ENCODE measurements at regions of chr20 and their contacts with region 1.

Region 1: GRCh38 chr20:34558320-34559218 is at the start of gene MAP1LC3A:
- DNase-seq: peak; percentile 90
- H3K4me3 Mint-ChIP-seq: peak within 1 kb of the TSS; percentile 81
- H3K27ac Mint-ChIP-seq: peak within 1 kb of the TSS; percentile 81
- H3K4me1 Mint-ChIP-seq: peaks cover 11% of the 10 kb centered on the region
- H3K27me3 Mint-ChIP-seq: no peaks in the 10 kb centered on the region
- total RNA-seq, gene MAP1LC3A: 1.6 to 1.7 TPM

Region 2: GRCh38 chr20:34415079-34415478 is 143.5 kb before region 1 on chr20:
- CTCF ChIA-PET with region 1: no interaction called
- intact Hi-C with region 1: no loop called
- DNase-seq: no peak
- H3K4me3 Mint-ChIP-seq: no peak overlapping the region
- H3K27ac Mint-ChIP-seq: peak overlapping the region; percentile 62
- H3K4me1 Mint-ChIP-seq: peaks cover 17% of the 10 kb centered on the region
- H3K27me3 Mint-ChIP-seq: no peaks in the 10 kb centered on the region

Region 3: DNA sequence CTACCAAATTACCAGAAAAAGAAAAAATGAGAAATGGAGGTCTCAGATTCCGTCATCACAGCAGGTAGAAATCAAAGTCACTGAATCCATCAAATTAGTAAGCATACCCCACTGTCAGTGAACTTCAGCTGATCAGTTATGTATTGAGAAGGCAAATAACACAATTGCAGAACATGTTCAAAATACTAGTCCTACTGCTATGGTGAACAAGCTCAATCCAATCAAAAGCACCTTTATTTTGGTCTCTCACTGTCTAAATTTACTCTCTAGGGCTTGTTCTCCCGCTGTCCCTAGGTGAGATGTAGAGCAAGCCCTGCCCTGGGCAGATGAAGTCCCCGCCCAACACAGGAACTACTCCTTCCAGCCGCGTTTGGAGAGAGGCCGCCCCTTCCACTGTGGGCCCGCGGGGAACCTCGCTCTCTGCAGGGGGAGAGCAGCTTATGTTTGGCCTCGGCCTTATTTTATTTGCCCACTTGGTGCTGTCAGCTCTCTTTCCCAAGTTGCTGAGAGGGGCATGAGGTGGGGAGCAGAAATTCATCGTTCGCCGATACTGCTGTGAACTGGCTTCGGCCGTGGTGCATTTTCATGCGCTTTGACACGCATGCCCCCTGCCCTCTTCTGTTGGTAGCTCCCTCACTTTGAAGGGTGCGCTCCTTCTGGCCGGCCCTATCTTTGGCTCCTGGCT is 14.3 kb before region 1 on chr20:
- CTCF ChIA-PET with region 1: interaction called, 3 read pairs
- intact Hi-C with region 1: loop called (anchors 2 kb)
- DNase-seq: peak; percentile 51
- H3K4me3 Mint-ChIP-seq: peak overlapping the region; percentile 41
- H3K27ac Mint-ChIP-seq: no peak overlapping the region
- H3K4me1 Mint-ChIP-seq: peaks cover 22% of the 10 kb centered on the region
- H3K27me3 Mint-ChIP-seq: no peaks in the 10 kb centered on the region

Region 4: GRCh38 chr20:34579979-34580940 is 21.7 kb after region 1 on chr20:
- CTCF ChIA-PET with region 1: interaction called, 6 read pairs
- intact Hi-C with region 1: loop called (anchors 2 kb)
- DNase-seq: peak; percentile 26
- H3K4me3 Mint-ChIP-seq: no peak overlapping the region
- H3K27ac Mint-ChIP-seq: peak overlapping the region; percentile 94
- H3K4me1 Mint-ChIP-seq: peaks cover 24% of the 10 kb centered on the region
- H3K27me3 Mint-ChIP-seq: no peaks in the 10 kb centered on the region